ENCODE measurements at regions of chr17 and their contacts with region 1.

Region 1: DNA sequence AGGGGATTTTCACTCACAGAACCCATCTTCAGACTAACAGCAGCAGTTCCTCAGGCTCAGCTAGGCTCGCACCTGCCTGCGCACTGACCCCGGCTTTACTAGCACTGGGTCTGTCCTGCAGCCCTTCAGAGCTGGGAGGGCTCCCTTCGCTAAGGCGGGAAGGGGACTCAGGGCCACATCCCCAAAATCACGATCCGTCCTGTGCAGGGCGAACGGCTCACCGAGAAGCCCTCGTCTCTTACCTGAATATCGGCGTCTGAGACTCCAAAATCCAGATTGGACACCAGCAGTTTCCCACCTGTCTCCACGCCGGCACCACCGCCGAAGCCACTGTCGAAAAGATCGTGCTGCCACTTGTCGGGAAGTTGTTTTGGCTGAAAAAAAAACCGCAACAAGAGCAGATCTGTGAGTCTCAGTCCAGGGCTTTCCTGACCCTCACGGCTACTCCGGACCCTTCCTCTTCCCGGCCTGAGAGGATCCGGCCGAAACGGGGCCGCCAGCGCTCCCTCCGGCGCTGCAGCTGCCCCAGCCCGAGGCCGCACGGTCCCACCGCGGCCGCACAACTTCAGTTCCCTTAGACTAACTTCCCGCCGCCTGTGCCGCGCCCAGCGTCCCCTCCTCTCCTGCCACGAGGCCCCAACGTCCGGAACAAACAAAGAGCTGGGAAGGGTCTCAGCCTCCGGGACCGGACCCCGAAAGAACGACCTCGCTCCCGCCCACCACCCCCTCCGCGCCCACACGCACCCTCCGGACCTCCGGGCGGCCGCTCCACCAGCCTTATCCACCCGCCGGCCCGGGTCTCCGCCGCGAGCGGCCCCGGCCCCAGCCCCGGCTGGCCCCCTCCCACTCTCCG is 713 bp downstream of the ALYREF start:
- DNase-seq: no peak
- H3K27ac ChIP-seq: peak overlapping the region; percentile 98
- CTCF ChIP-seq: no peak

Region 2: GRCh38 chr17:81821603-81822311 is 68.9 kb before region 1 on chr17:
- CTCF ChIA-PET with region 1: no interaction called
- POLR2A ChIA-PET with region 1: no interaction called
- DNase-seq: no peak
- H3K27ac ChIP-seq: peak overlapping the region; percentile 55
- CTCF ChIP-seq: peak; percentile 48

Region 3: GRCh38 chr17:81860756-81861518 is 29.7 kb before region 1 on chr17:
- CTCF ChIA-PET with region 1: no interaction called
- POLR2A ChIA-PET with region 1: no interaction called
- DNase-seq: peak; percentile 99
- H3K27ac ChIP-seq: peak overlapping the region; percentile 97
- CTCF ChIP-seq: no peak

Region 4: DNA sequence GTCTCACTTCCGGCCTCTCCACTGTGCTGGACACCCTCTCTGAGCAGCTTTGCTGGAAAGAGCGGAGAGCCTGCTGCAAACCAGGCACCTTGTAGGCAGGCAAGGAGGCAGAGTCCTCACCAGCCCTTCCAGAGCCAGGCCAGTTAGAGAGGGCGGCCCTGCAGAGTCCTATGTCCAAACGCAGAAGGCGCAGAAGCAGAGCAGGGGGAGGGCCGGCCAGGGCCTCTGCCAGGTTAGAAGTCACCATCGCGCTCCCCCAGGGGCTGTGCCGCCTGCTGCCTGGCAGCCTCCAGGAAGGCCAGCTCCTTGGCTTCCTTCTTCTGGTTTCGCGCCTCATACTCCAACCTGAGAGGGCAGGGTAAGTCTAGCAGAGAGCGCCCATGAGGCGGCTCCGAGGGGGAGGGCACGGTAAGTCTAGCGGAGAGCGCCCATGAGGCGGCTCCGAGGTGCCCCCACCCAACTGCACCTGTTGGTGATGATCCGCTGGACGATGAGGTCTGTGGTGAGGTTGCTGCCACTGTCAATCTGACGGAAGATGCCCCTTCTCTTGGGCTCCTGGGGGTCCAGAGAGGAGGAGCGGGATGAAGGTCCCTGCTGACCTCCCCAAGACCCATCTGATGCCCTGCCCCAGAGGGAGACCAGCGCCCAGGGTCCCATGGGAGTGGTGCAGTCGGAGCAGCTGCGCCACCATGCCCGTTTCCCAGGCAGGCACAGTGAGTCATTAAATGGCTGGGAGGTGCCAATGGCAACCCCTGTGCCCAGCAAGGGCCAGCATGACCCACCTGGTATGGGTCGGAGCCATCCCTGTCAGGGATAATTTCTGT is 14.1 kb after region 1 on chr17:
- CTCF ChIA-PET with region 1: no interaction called
- POLR2A ChIA-PET with region 1: interaction called, 10 read pairs
- DNase-seq: no peak
- H3K27ac ChIP-seq: peak overlapping the region; percentile 98
- CTCF ChIP-seq: no peak

Measured in RWPE1 (cell line).